ENCODE measurements at regions of chr5 and their contacts with region 1.

Region 1: GRCh38 chr5:458547-459353 is 15.8 kb downstream of the EXOC3 start:
- DNase-seq: peak; percentile 83
- ATAC-seq: peak; percentile 86
- H3K4me3 Mint-ChIP-seq: peak overlapping the region; percentile 54
- H3K27ac Mint-ChIP-seq: peak overlapping the region; percentile 95
- H3K4me1 Mint-ChIP-seq: peaks cover 67% of the 10 kb centered on the region
- H3K27me3 Mint-ChIP-seq: no peaks in the 10 kb centered on the region
- CTCF ChIP-seq: no peak

Region 2: DNA sequence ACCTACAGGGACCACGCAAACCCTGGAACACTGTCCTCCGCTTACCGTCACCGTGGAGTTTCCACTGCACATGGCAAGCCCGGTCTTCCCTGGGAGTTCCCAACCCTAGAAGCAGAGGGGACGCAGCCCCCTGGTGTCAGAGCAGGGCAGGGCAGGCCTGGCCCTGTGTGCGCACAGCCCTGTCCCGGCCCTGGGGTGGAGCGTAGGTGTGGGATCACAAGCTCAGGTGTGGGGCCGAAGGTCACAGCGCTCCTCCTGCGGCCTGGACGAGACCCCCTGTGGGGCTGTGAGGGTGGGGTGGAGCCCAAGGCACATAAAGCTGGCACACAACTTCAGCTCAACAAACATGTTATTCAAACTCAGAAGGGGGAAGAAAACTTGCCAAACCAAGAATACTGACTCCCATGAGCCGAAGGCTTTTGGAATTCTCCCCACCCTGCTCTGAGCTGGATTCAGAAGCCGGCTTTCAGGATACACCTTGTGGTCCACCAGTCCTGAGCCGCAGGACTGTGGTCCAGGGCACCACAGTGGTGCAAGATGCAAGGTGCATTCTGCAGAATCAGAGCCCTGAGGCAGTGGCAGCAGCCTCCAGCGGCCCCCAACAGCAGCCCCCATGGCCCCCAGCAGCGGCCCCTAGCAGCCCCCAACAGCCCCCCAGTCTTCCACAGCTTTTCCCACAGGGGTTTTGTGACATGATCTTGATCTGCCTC is 27.6 kb before region 1 on chr5:
- CTCF ChIA-PET with region 1: no interaction called
- POLR2A ChIA-PET with region 1: no interaction called
- intact Hi-C with region 1: no loop called
- DNase-seq: peak; percentile 58
- ATAC-seq: peak; percentile 93
- H3K4me3 Mint-ChIP-seq: no peak overlapping the region
- H3K27ac Mint-ChIP-seq: no peak overlapping the region
- H3K4me1 Mint-ChIP-seq: peaks cover 10% of the 10 kb centered on the region
- H3K27me3 Mint-ChIP-seq: peaks cover 6% of the 10 kb centered on the region
- CTCF ChIP-seq: peak; percentile 87

Region 3: GRCh38 chr5:472656-473553 is 14.2 kb after region 1 on chr5:
- CTCF ChIA-PET with region 1: interaction called, 3 read pairs
- POLR2A ChIA-PET with region 1: interaction called, 31 read pairs
- intact Hi-C with region 1: no loop called
- DNase-seq: peak; percentile 89
- ATAC-seq: peak; percentile 84
- H3K4me3 Mint-ChIP-seq: peak overlapping the region; percentile 90
- H3K27ac Mint-ChIP-seq: peak overlapping the region; percentile 84
- H3K4me1 Mint-ChIP-seq: peaks cover 20% of the 10 kb centered on the region
- H3K27me3 Mint-ChIP-seq: peaks cover 2% of the 10 kb centered on the region
- CTCF ChIP-seq: no peak

Region 4: DNA sequence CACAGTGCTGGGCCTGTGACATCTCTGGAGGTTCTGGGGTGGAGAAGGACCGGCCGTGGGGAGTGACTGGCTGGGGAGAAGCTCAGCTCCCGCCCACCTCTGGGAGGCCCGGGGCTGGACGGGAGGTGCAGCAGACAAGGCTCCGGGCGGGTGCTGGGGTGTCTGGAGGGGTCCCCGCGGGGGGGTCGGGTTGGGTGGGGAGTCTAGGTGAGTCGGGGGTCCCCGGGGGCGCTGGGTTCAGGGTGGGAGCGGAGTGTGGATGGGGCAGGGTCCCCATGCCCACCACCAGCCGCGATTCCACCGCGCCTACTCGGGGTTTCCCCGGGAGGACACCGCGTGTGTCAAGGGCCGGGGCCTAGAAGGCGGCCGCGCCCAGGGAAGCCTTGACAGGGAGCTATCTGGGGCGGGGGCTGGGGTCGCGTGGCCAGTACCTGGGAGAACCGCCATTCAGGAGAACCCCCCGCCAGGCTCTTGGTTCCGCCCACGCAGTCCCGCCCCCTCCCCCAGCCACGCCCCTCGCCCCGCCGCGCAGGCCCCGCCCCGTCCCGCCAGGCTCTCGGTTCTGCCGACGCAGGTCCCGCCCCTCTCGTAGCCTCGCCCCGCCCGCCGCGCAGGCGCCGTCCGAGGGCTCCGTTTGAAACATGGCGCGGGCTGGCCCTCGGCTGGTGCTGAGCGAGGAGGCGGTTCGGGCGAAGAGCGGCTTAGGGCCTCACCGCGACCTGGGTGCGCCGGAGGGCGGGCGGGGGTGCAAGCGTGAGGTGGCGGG is 153.2 kb after region 1 on chr5 and contains the start of gene CEP72:
- CTCF ChIA-PET with region 1: no interaction called
- POLR2A ChIA-PET with region 1: no interaction called
- intact Hi-C with region 1: loop called (anchors 10 kb)
- DNase-seq: peak; percentile 93
- ATAC-seq: peak; percentile 98
- H3K4me3 Mint-ChIP-seq: peak within 1 kb of the TSS; percentile 80
- H3K27ac Mint-ChIP-seq: peak within 1 kb of the TSS; percentile 83
- H3K4me1 Mint-ChIP-seq: peaks cover 48% of the 10 kb centered on the region
- H3K27me3 Mint-ChIP-seq: peaks cover 10% of the 10 kb centered on the region
- CTCF ChIP-seq: no peak
- total RNA-seq, gene CEP72: 27.0 to 28.9 TPM

Region 5: GRCh38 chr5:759111-759751 is 300.5 kb after region 1 on chr5:
- CTCF ChIA-PET with region 1: no interaction called
- POLR2A ChIA-PET with region 1: no interaction called
- intact Hi-C with region 1: no loop called
- DNase-seq: peak; percentile 49
- ATAC-seq: peak; percentile 64
- H3K4me3 Mint-ChIP-seq: no peak overlapping the region
- H3K27ac Mint-ChIP-seq: no peak overlapping the region
- H3K4me1 Mint-ChIP-seq: peaks cover 11% of the 10 kb centered on the region
- H3K27me3 Mint-ChIP-seq: no peaks in the 10 kb centered on the region
- CTCF ChIP-seq: no peak

Measured in activated CD8-positive, alpha-beta T cell treated with anti-CD3 and anti-CD28 coated beads for 36 hours (primary cell).